ENCODE measurements at regions of chr1 and their contacts with region 1.

Region 1: GRCh38 chr1:10430216-10431069 is at the start of gene CENPS:
- DNase-seq: peak; percentile 96 to 98 (median 97)
- ATAC-seq: peak; percentile 97 to 98
- H3K4me3 ChIP-seq: peak within 1 kb of the TSS; percentile 85
- H3K27ac ChIP-seq: peak within 1 kb of the TSS; percentile 31
- H3K4me1 ChIP-seq: peaks cover 5% of the 10 kb centered on the region
- H3K27me3 ChIP-seq: no peaks in the 10 kb centered on the region
- total RNA-seq, gene CENPS: 5.2 to 9.7 (median 7.7) TPM

Region 2: GRCh38 chr1:10378081-10378841 is 52.2 kb before region 1 on chr1:
- intact Hi-C with region 1: loop called (anchors 2 to 10 kb)
- DNase-seq: peak; percentile 49 to 70 (median 61)
- ATAC-seq: peak; percentile 18 to 65
- H3K4me3 ChIP-seq: no peak overlapping the region
- H3K27ac ChIP-seq: no peak overlapping the region
- H3K4me1 ChIP-seq: peaks cover 4% of the 10 kb centered on the region
- H3K27me3 ChIP-seq: no peaks in the 10 kb centered on the region

Region 3: GRCh38 chr1:10494754-10495474 is 64.5 kb after region 1 on chr1:
- intact Hi-C with region 1: loop called in 2 of 4 experiments (anchors 2 to 10 kb)
- DNase-seq: peak; percentile 61 to 85 (median 81)
- ATAC-seq: peak; percentile 80 to 81
- H3K4me3 ChIP-seq: no peak overlapping the region
- H3K27ac ChIP-seq: no peak overlapping the region
- H3K4me1 ChIP-seq: peaks cover 5% of the 10 kb centered on the region
- H3K27me3 ChIP-seq: no peaks in the 10 kb centered on the region

Region 4: GRCh38 chr1:11337580-11338073 is 907.2 kb after region 1 on chr1:
- intact Hi-C with region 1: no loop called
- DNase-seq: peak; percentile 47 to 82 (median 78)
- ATAC-seq: peak in 1 of 2 donors; percentile 56
- H3K4me3 ChIP-seq: no peak overlapping the region
- H3K27ac ChIP-seq: no peak overlapping the region
- H3K4me1 ChIP-seq: no peaks in the 10 kb centered on the region
- H3K27me3 ChIP-seq: no peaks in the 10 kb centered on the region

Measured in right cardiac atrium (tissue), 5 donors.